ENCODE measurements at regions of chr20 and their contacts with region 1.

Region 1: GRCh38 chr20:37007898-37008649 is 56.6 kb upstream of the SAMHD1 start:
- DNase-seq: no peak
- ATAC-seq: peak; percentile 85
- H3K4me3 ChIP-seq: no peak overlapping the region
- H3K27ac ChIP-seq: peak overlapping the region; percentile 37; the same call in 1 of the 2 replicates
- H3K4me1 ChIP-seq: peaks cover 23% of the 10 kb centered on the region
- H3K27me3 ChIP-seq: no peaks in the 10 kb centered on the region
- CTCF ChIP-seq: peak; percentile 33 to 36 (median 36); a peak in 4 of 6 replicates
- EP300 ChIP-seq: no peak
- POLR2A ChIP-seq: no peak
- RAD21 ChIP-seq: peak; percentile 60

Region 2: GRCh38 chr20:36493801-36494114 is 514.3 kb before region 1 on chr20:
- CTCF ChIA-PET with region 1: no interaction called
- POLR2A ChIA-PET with region 1: no interaction called
- RAD21 ChIA-PET with region 1: no interaction called
- SMC1A ChIA-PET with region 1: no interaction called
- in situ Hi-C with region 1: no loop called
- intact Hi-C with region 1: no loop called
- DNase-seq: no peak
- ATAC-seq: no peak
- H3K4me3 ChIP-seq: no peak overlapping the region
- H3K27ac ChIP-seq: no peak overlapping the region
- H3K4me1 ChIP-seq: peaks cover 21% of the 10 kb centered on the region
- H3K27me3 ChIP-seq: no peaks in the 10 kb centered on the region
- CTCF ChIP-seq: no peak
- EP300 ChIP-seq: no peak
- POLR2A ChIP-seq: no peak
- RAD21 ChIP-seq: no peak

Region 3: DNA sequence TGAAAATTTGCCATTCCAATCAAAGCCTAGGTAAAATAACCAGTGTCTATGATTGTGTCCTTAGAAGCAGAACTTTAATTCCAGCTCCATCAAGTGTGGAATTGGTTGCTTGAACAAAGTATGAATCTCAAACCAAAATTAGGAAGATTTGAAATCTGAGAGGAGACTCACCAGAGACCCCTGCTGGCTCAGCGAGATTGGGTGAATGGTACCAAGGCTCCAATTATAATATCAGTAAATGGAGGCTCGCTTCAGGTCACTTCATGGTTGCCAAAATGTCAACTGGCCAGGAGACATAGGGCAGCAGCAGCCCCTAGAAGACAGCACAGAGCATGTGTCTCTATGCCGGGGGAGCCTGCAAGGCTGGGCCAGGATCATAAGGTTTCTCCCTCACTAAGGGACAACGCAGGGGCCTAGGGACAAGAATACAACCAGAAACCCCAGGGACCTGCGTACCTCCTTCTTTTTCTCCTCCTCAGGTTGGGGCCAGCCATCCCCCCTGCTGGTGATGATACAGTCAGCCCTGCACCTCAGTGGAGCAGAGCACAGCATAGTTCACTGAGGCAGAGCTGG is 73.7 kb after region 1 on chr20:
- CTCF ChIA-PET with region 1: interaction called, 31 read pairs
- POLR2A ChIA-PET with region 1: no interaction called
- RAD21 ChIA-PET with region 1: interaction called, 9 read pairs
- SMC1A ChIA-PET with region 1: interaction called, 19 read pairs
- in situ Hi-C with region 1: no loop called
- intact Hi-C with region 1: loop called (anchors 5 kb)
- DNase-seq: no peak
- ATAC-seq: peak; percentile 78
- H3K4me3 ChIP-seq: no peak overlapping the region
- H3K27ac ChIP-seq: no peak overlapping the region
- H3K4me1 ChIP-seq: no peaks in the 10 kb centered on the region
- H3K27me3 ChIP-seq: no peaks in the 10 kb centered on the region
- CTCF ChIP-seq: peak; percentile 43 to 65 (median 65)
- EP300 ChIP-seq: no peak
- POLR2A ChIP-seq: no peak
- RAD21 ChIP-seq: peak; percentile 56

Region 4: GRCh38 chr20:37111926-37112455 is 103.9 kb after region 1 on chr20:
- CTCF ChIA-PET with region 1: no interaction called
- POLR2A ChIA-PET with region 1: no interaction called
- RAD21 ChIA-PET with region 1: no interaction called
- SMC1A ChIA-PET with region 1: no interaction called
- in situ Hi-C with region 1: no loop called
- intact Hi-C with region 1: no loop called
- DNase-seq: no peak
- ATAC-seq: no peak
- H3K4me3 ChIP-seq: no peak overlapping the region
- H3K27ac ChIP-seq: no peak overlapping the region
- H3K4me1 ChIP-seq: no peaks in the 10 kb centered on the region
- H3K27me3 ChIP-seq: no peaks in the 10 kb centered on the region
- CTCF ChIP-seq: no peak
- EP300 ChIP-seq: no peak
- POLR2A ChIP-seq: no peak
- RAD21 ChIP-seq: no peak

Measured in GM12878 (cell line).